MCF 10A (cell line): ENCODE measurements at regions of chr3 and their contacts with region 1.

Region 1: GRCh38 chr3:187745201-187746058 is at the start of gene BCL6:
- DNase-seq: peak; percentile 98
- H3K4me3 Mint-ChIP-seq: peak within 1 kb of the TSS; percentile 98
- H3K27ac Mint-ChIP-seq: peak within 1 kb of the TSS; percentile 100
- H3K4me1 Mint-ChIP-seq: peaks cover 15% of the 10 kb centered on the region
- H3K27me3 Mint-ChIP-seq: no peaks in the 10 kb centered on the region
- CTCF ChIP-seq: no peak
- total RNA-seq, gene BCL6: 16.4 and 20.9 TPM in 2 replicates

Region 2: GRCh38 chr3:187519428-187519890 is 226.0 kb before region 1 on chr3:
- CTCF ChIA-PET with region 1: no interaction called
- POLR2A ChIA-PET with region 1: no interaction called
- intact Hi-C with region 1: no loop called
- DNase-seq: no peak
- H3K4me3 Mint-ChIP-seq: no peak overlapping the region
- H3K27ac Mint-ChIP-seq: no peak overlapping the region
- H3K4me1 Mint-ChIP-seq: no peaks in the 10 kb centered on the region
- H3K27me3 Mint-ChIP-seq: peaks cover 48% of the 10 kb centered on the region
- CTCF ChIP-seq: no peak

Region 3: GRCh38 chr3:187763850-187764648 is 18.6 kb after region 1 on chr3:
- CTCF ChIA-PET with region 1: interaction called, 5 read pairs
- POLR2A ChIA-PET with region 1: interaction called, 13 read pairs
- intact Hi-C with region 1: no loop called
- DNase-seq: no peak
- H3K4me3 Mint-ChIP-seq: no peak overlapping the region
- H3K27ac Mint-ChIP-seq: no peak overlapping the region
- H3K4me1 Mint-ChIP-seq: peaks cover 5% of the 10 kb centered on the region
- H3K27me3 Mint-ChIP-seq: no peaks in the 10 kb centered on the region
- CTCF ChIP-seq: no peak

Region 4: DNA sequence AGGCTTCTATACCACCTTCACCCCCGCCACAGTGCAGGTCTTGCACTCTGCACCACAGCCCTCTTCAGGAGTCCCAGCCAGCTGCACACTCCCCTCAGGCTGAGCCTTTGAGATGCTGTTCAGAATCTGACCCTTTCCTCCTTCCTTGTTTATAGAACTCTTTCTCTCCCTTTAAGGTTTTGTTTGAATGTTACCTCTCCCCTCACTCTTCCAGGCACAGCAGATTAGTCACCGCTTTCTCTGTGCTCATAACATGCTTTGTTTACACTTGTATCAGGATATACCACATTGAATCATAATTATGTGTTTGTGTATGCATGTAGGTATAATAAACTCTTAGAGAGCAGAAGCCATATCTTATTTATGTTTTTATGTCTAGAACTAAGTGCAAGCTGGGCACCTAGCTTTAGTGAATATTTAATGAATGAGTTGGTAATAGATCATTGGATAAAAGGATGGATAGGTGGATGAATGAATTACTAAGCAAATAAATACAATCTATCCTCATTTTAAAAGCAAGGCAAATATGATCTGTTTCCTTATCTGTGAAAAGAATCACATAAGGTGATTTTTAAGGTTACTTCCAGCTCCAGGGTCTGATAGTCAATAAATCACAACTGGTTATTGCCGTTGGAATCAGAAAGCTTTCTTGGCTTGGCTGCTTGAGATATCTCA is 168.3 kb after region 1 on chr3:
- CTCF ChIA-PET with region 1: interaction called, 8 read pairs
- POLR2A ChIA-PET with region 1: interaction called, 42 read pairs
- intact Hi-C with region 1: loop called (anchors 2 kb)
- DNase-seq: peak; percentile 76
- H3K4me3 Mint-ChIP-seq: no peak overlapping the region
- H3K27ac Mint-ChIP-seq: peak overlapping the region; percentile 32
- H3K4me1 Mint-ChIP-seq: peaks cover 21% of the 10 kb centered on the region
- H3K27me3 Mint-ChIP-seq: no peaks in the 10 kb centered on the region
- CTCF ChIP-seq: no peak

Region 5: DNA sequence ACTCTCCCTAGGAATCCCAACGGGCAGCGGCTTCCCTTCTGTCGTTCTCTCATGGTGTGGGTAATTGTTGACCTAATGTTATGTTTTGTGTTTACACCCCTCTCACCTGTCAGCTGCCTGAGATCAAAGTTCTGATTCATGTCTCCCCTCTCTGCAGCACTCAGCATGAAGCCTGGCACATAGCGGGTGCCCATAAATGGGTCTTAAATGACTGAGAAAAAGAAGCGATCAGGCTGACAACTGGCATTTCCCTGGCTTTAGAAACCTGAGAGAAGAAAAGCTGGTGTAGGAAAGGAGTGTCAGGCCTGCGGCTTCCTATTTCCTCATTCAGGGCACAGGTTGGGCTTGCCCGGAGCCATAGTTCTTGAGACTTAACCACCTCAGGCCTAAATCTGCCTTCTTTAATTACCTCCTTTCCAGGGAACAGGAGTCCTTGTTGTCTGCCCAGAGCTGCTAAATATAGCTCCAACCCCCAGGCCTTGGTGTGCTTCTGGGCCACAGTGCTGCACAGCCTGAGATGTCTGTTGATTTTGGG is 440.4 kb after region 1 on chr3:
- CTCF ChIA-PET with region 1: interaction called, 3 read pairs
- POLR2A ChIA-PET with region 1: interaction called, 13 read pairs
- intact Hi-C with region 1: loop called (anchors 10 kb)
- DNase-seq: peak; percentile 38
- H3K4me3 Mint-ChIP-seq: no peak overlapping the region
- H3K27ac Mint-ChIP-seq: no peak overlapping the region
- H3K4me1 Mint-ChIP-seq: peaks cover 38% of the 10 kb centered on the region
- H3K27me3 Mint-ChIP-seq: no peaks in the 10 kb centered on the region
- CTCF ChIP-seq: no peak

Region 6: DNA sequence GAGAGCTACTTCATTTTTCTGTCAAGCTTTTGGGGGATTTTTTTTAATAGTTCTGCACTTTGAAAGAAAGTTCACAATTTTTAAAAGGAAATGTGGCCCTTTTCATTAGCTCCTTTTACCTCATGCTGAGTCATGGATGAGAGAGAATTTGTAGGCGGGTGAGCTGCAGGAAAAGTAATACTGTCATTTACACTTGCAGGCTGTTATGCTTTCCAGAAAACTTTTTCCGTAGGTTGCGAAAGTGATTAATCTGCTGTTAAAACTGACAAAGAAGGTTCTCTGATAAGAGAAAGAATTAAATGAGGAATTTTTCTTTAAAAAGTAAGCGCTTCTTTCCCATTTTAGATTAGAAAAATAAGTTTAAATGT is 838.7 kb after region 1 on chr3:
- CTCF ChIA-PET with region 1: interaction called, 4 read pairs
- POLR2A ChIA-PET with region 1: interaction called, 14 read pairs
- intact Hi-C with region 1: loop called (anchors 2 kb)
- DNase-seq: peak; percentile 78
- H3K4me3 Mint-ChIP-seq: peak overlapping the region; percentile 62
- H3K27ac Mint-ChIP-seq: no peak overlapping the region
- H3K4me1 Mint-ChIP-seq: peaks cover 26% of the 10 kb centered on the region
- H3K27me3 Mint-ChIP-seq: no peaks in the 10 kb centered on the region
- CTCF ChIP-seq: no peak

Region 7: DNA sequence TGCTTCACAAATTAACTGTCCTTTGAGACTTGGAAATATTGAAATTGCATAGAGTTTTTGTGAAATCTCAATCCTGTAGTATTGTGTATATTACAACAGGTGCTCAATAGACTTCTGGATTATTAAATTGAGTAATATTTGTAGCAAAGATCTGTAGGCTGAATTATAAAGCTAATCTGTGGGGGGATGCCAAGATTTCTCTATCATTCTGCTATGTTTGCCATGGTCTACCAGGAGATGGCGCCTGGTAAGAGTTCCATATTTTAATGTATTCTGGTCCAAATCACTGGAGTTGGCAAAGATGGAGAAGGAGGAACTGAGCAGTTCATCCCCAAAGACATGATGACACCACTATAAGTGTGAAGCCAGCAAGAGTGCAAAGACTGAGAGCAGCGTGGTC is 1085.5 kb after region 1 on chr3:
- CTCF ChIA-PET with region 1: interaction called, 8 read pairs
- POLR2A ChIA-PET with region 1: interaction called, 21 read pairs
- intact Hi-C with region 1: loop called (anchors 5 kb)
- DNase-seq: peak; percentile 45
- H3K4me3 Mint-ChIP-seq: no peak overlapping the region
- H3K27ac Mint-ChIP-seq: no peak overlapping the region
- H3K4me1 Mint-ChIP-seq: peaks cover 21% of the 10 kb centered on the region
- H3K27me3 Mint-ChIP-seq: no peaks in the 10 kb centered on the region
- CTCF ChIP-seq: no peak